ENCODE measurements at regions of chr2 and their contacts with region 1.

Region 1: DNA sequence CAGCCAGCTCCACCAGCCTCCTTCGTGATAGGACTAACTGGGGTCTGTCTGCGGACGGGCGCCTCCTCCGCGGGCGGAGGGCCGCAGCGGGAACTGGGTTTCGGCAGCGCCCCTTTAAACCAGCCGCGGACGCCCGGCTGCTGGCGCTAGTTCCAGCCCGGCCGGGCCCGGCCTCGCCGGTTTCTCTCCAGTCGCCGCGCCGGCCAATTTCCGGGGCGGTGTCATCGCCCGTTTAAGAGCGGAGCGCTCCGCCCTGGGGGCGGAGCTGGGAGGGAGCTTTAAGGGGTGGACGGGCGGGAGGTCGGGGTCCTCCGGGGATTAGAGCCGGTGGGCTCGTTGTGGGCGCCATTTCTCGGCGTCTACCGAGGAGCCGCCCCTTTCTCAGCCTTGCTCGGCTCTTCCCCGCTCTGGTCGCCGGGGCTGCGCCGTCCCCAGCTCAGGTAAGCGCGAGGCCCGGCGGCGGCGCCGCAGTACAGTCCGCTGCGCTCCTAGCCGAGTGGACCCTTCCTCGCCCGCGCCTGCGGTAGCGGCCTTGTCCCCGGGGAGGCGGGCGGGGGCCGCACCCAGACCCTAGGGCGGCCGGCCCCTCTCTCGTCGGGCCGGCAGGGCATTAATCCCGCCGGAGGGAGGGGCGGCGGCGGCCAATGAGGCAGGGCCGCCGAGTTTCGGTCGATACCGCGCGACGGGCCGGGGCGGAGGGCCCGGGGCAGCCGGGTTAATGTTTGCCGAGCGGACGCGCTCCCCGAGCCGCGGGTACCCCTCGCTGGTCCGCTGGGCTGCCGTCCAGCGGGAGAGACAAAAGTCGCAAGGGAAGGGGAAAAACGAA is at the start of gene EPB41L5:
- DNase-seq: peak; percentile 93
- ATAC-seq: peak; percentile 97
- H3K4me3 ChIP-seq: peak within 1 kb of the TSS; percentile 93
- H3K27ac ChIP-seq: peak within 1 kb of the TSS; percentile 18; the same call in 1 of the 2 replicates
- H3K4me1 ChIP-seq: peaks cover 4% of the 10 kb centered on the region; the same call in 1 of the 2 replicates
- H3K27me3 ChIP-seq: no peaks in the 10 kb centered on the region
- CTCF ChIP-seq: 0 out of 2 replicates have a peak, but pooled peaks have one; percentile 6
- POLR2A ChIP-seq: peak; percentile 70
- RAD21 ChIP-seq: 0 out of 2 replicates have a peak, but pooled peaks have one; percentile 13
- total RNA-seq, gene EPB41L5: 10.6 and 11.4 TPM in 2 replicates

Region 2: GRCh38 chr2:119352357-119352756 is 660.6 kb before region 1 on chr2:
- CTCF ChIA-PET with region 1: no interaction called
- POLR2A ChIA-PET with region 1: no interaction called
- dilution Hi-C with region 1: no loop called
- in situ Hi-C with region 1: no loop called
- intact Hi-C with region 1: no loop called
- DNase-seq: no peak
- ATAC-seq: no peak
- H3K4me3 ChIP-seq: no peak overlapping the region
- H3K27ac ChIP-seq: no peak overlapping the region
- H3K4me1 ChIP-seq: no peaks in the 10 kb centered on the region
- H3K27me3 ChIP-seq: no peaks in the 10 kb centered on the region
- CTCF ChIP-seq: no peak
- POLR2A ChIP-seq: no peak
- RAD21 ChIP-seq: no peak

Region 3: DNA sequence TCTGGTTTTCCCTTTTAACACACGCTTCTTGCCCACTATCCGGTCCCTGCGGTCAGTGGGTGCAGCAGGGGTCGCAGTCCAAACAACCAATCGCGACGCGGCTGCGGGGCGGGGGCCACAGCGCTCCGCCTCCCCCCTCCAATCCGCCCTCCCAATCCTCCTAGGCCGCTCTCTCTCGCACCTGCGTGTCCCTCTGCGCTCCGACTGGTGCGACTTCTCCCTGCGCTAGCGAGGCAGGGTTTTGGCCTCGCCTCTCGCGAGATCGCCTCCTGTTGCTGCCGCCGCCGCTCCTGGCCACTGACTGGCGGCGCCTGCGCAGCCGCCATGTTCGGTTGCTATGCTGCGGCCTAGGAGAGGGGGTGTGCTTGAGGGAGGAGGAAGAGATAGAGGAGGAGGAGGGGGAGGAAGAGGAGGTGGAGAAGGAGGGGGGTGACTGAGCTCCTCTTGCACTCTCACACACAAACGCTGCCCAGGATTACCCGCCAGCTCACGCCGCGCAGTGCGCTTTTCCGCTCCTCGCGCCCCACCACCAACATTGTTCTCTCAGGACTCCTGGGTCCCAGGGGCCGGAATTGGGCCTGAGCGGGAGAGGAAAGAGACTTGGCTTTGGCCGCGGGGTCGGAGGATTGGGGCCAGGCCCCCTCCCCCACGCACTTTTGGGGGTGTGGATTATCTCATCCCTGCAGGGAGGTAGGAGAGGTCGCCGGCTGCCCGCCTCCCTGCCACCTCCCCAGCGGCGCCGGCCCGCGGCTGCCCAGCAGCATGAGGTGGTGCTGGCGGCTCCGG is 253.3 kb before region 1 on chr2 and contains the start of gene PTPN4:
- CTCF ChIA-PET with region 1: no interaction called
- POLR2A ChIA-PET with region 1: interaction called, 4 read pairs
- dilution Hi-C with region 1: no loop called
- in situ Hi-C with region 1: no loop called
- intact Hi-C with region 1: loop called (anchors 1 kb)
- DNase-seq: peak; percentile 98
- ATAC-seq: peak; percentile 95
- H3K4me3 ChIP-seq: peak within 1 kb of the TSS; percentile 80
- H3K27ac ChIP-seq: peak within 1 kb of the TSS; percentile 79
- H3K4me1 ChIP-seq: no peaks in the 10 kb centered on the region
- H3K27me3 ChIP-seq: no peaks in the 10 kb centered on the region
- CTCF ChIP-seq: no peak
- POLR2A ChIP-seq: 0 out of 2 replicates have a peak, but pooled peaks have one; percentile 39
- RAD21 ChIP-seq: no peak
- total RNA-seq, gene PTPN4: 13.6 and 19.2 TPM in 2 replicates

Region 4: DNA sequence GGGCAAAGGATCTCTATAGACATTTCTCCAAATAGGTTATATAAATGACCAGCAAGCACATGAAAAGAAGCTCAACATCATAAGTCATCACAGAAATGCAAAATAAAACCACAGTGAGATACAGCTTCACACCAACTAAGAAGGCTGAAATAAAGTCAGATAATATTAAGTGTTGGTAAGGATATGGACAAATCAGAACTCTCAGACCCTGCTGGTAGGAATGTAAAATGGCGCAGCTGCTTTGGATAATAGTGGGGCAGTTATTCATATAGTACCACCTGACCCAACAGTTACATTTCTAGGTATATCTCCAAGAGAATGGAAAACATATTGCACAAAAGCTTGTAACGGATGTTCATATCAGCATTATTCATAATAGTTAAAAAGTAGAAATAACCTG is 13.9 kb after region 1 on chr2:
- CTCF ChIA-PET with region 1: no interaction called
- POLR2A ChIA-PET with region 1: no interaction called
- dilution Hi-C with region 1: no loop called
- in situ Hi-C with region 1: no loop called
- intact Hi-C with region 1: no loop called
- DNase-seq: no peak
- ATAC-seq: no peak
- H3K4me3 ChIP-seq: no peak overlapping the region
- H3K27ac ChIP-seq: no peak overlapping the region
- H3K4me1 ChIP-seq: no peaks in the 10 kb centered on the region
- H3K27me3 ChIP-seq: no peaks in the 10 kb centered on the region
- CTCF ChIP-seq: 0 out of 2 replicates have a peak, but pooled peaks have one; percentile 5
- POLR2A ChIP-seq: no peak
- RAD21 ChIP-seq: no peak

Region 5: DNA sequence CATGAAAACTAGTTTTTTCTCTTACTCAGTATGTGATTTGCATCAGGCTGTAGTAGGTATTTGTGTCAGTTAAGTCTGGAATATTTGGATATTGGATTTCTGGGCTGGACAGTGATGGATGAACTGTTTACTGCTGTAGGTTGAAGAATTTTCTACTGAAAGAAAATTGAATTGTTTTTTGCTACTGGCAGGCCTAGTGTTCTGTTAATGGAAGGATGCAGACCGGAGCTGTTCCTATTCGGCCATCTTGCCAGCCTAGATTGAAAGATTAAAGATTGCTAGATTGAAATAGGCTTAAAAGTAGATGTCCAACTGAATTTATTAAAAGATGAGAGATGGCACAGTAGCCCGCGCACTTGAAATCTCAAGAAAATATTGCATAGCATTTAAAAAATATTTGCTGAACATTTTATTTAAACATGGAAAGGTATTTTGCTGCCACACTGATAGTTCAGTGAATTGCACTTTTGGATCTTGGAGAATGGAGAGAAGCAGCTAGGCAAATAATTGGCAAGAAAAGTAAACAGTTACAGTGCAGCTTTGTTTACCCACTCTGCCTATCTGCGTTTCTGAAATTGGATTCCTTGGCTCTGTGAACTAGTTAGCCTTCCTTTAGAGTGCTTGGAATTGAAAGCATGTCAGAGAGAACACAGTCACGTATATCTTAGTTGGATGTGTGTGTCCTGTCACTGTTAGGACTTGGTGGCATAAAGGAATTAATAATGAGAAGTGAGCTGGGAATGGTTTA is 54.0 kb after region 1 on chr2:
- CTCF ChIA-PET with region 1: no interaction called
- POLR2A ChIA-PET with region 1: no interaction called
- dilution Hi-C with region 1: no loop called
- in situ Hi-C with region 1: no loop called
- intact Hi-C with region 1: loop called (anchors 5 kb)
- DNase-seq: peak; percentile 66
- ATAC-seq: peak; percentile 86
- H3K4me3 ChIP-seq: no peak overlapping the region
- H3K27ac ChIP-seq: no peak overlapping the region
- H3K4me1 ChIP-seq: peaks cover 5% of the 10 kb centered on the region; the same call in 1 of the 2 replicates
- H3K27me3 ChIP-seq: no peaks in the 10 kb centered on the region
- CTCF ChIP-seq: no peak
- POLR2A ChIP-seq: no peak
- RAD21 ChIP-seq: no peak

Region 6: DNA sequence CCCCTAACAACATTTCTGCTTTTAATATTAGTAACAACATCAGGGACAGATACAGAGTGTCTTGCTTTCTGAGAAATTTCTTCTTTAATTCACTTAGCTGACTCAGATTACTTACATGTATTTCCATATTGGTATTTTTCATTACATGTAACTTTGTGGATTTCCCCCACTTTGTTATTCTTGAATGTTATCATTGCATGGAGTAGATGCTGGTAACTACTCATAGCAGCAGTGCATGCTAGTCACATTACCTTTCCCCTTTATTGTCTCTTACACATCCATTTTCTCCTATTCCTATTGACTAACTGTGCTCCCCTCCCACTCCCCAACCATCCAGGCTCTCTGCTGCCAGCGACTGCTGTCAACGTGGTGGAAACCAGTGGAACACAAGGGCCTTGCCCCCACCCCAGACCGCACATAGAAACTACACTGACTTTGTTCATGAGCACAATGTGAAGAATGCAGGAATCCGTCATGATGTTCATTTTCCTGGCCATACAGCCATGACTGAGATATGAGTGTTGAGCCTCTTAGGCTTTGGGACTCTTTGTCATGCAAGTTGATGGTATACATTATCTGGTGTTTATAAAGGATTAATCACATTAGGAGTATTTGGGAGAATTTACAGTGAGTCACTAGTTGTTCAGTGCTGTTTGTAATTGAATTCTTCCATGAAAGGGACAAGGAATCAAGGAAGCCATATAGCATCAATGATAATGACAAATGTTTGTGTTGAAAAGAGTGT is 90.9 kb after region 1 on chr2:
- CTCF ChIA-PET with region 1: no interaction called
- POLR2A ChIA-PET with region 1: no interaction called
- dilution Hi-C with region 1: no loop called
- in situ Hi-C with region 1: no loop called
- intact Hi-C with region 1: loop called (anchors 5 kb)
- DNase-seq: peak; percentile 99
- ATAC-seq: peak; percentile 89
- H3K4me3 ChIP-seq: no peak overlapping the region
- H3K27ac ChIP-seq: peak overlapping the region; percentile 71
- H3K4me1 ChIP-seq: peaks cover 4% of the 10 kb centered on the region
- H3K27me3 ChIP-seq: no peaks in the 10 kb centered on the region
- CTCF ChIP-seq: no peak
- POLR2A ChIP-seq: peak; percentile 54
- RAD21 ChIP-seq: peak; percentile 27; the same call in 1 of the 2 replicates

Measured in IMR-90 (cell line).